ENCODE measurements at regions of chr17 and their contacts with region 1.

Region 1: GRCh38 chr17:75289115-75289831 is at the start of gene SLC25A19:
- DNase-seq: peak; percentile 95 to 99 (median 97)
- H3K4me3 ChIP-seq: peak within 1 kb of the TSS; percentile 93 to 96
- H3K4me3 Mint-ChIP-seq: peak within 1 kb of the TSS; percentile 98 to 100 (median 100)
- H3K27ac ChIP-seq: peak within 1 kb of the TSS; percentile 79
- H3K27ac Mint-ChIP-seq: peak within 1 kb of the TSS; percentile 98 to 100 (median 100)
- H3K4me1 ChIP-seq: peaks cover 12% of the 10 kb centered on the region
- H3K4me1 Mint-ChIP-seq: peaks cover 4 to 31% (median 14%) of the 10 kb centered on the region in 4 donors
- H3K27me3 ChIP-seq: no peaks in the 10 kb centered on the region
- H3K27me3 Mint-ChIP-seq: no peaks in the 10 kb centered on the region
- total RNA-seq, gene SLC25A19: 19.8 to 21.8 TPM

Region 2: GRCh38 chr17:74873038-74873873 is 416.0 kb before region 1 on chr17:
- CTCF ChIA-PET with region 1: no interaction called
- POLR2A ChIA-PET with region 1: interaction called, 12 read pairs
- intact Hi-C with region 1: loop called (anchors 1 kb)
- DNase-seq: peak; percentile 97 to 100 (median 99)
- H3K4me3 ChIP-seq: peak overlapping the region; percentile 79 to 84
- H3K4me3 Mint-ChIP-seq: peak overlapping the region; percentile 87 to 98 (median 94)
- H3K27ac ChIP-seq: peak overlapping the region; percentile 90
- H3K27ac Mint-ChIP-seq: peak overlapping the region; percentile 90 to 98 (median 98)
- H3K4me1 ChIP-seq: peaks cover 22% of the 10 kb centered on the region
- H3K4me1 Mint-ChIP-seq: peaks cover 10 to 27% (median 17%) of the 10 kb centered on the region in 4 donors
- H3K27me3 ChIP-seq: no peaks in the 10 kb centered on the region
- H3K27me3 Mint-ChIP-seq: no peaks in the 10 kb centered on the region

Region 3: GRCh38 chr17:75205037-75205792 is 84.1 kb before region 1 on chr17 and contains the start of gene NUP85:
- CTCF ChIA-PET with region 1: interaction called, 6 read pairs
- POLR2A ChIA-PET with region 1: interaction called, 14 read pairs
- intact Hi-C with region 1: no loop called
- DNase-seq: peak; percentile 88 to 95 (median 93)
- H3K4me3 ChIP-seq: peak within 1 kb of the TSS; percentile 55 to 86
- H3K4me3 Mint-ChIP-seq: peak within 1 kb of the TSS; percentile 93 to 99 (median 96)
- H3K27ac ChIP-seq: peak within 1 kb of the TSS; percentile 80
- H3K27ac Mint-ChIP-seq: peak within 1 kb of the TSS; percentile 99 to 100 (median 99)
- H3K4me1 ChIP-seq: peaks cover 26% of the 10 kb centered on the region
- H3K4me1 Mint-ChIP-seq: peaks cover 15 to 48% (median 24%) of the 10 kb centered on the region in 4 donors
- H3K27me3 ChIP-seq: no peaks in the 10 kb centered on the region
- H3K27me3 Mint-ChIP-seq: no peaks in the 10 kb centered on the region
- total RNA-seq, gene NUP85: 137 to 164 TPM

Region 4: DNA sequence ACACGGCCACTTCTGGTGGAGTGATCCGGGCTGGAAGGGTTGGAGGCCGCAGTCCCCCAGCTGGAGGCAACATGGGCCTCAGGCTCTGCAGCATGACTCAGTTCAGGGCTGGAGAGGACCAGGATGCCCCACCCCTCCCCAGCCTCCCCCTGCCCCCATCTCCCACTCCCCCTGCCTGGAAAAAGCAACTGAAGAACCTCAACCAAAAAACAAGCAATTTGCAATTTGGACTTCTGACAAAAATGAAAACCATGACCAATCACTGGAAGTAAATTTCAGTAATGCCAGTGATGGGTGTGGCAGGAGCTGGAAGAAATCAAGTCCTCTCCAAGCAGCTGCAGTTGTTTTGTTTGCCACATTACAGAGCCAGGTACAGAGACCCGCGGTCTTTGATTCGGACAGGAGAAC is 11.6 kb before region 1 on chr17:
- CTCF ChIA-PET with region 1: interaction called, 59 read pairs
- POLR2A ChIA-PET with region 1: interaction called, 148 read pairs
- intact Hi-C with region 1: no loop called
- DNase-seq: no peak
- H3K4me3 ChIP-seq: no peak overlapping the region
- H3K4me3 Mint-ChIP-seq: no peak overlapping the region
- H3K27ac ChIP-seq: no peak overlapping the region
- H3K27ac Mint-ChIP-seq: no peak overlapping the region
- H3K4me1 ChIP-seq: peaks cover 6% of the 10 kb centered on the region
- H3K4me1 Mint-ChIP-seq: peaks cover 0 to 14% (median 4%) of the 10 kb centered on the region in 4 donors
- H3K27me3 ChIP-seq: no peaks in the 10 kb centered on the region
- H3K27me3 Mint-ChIP-seq: no peaks in the 10 kb centered on the region

Region 5: DNA sequence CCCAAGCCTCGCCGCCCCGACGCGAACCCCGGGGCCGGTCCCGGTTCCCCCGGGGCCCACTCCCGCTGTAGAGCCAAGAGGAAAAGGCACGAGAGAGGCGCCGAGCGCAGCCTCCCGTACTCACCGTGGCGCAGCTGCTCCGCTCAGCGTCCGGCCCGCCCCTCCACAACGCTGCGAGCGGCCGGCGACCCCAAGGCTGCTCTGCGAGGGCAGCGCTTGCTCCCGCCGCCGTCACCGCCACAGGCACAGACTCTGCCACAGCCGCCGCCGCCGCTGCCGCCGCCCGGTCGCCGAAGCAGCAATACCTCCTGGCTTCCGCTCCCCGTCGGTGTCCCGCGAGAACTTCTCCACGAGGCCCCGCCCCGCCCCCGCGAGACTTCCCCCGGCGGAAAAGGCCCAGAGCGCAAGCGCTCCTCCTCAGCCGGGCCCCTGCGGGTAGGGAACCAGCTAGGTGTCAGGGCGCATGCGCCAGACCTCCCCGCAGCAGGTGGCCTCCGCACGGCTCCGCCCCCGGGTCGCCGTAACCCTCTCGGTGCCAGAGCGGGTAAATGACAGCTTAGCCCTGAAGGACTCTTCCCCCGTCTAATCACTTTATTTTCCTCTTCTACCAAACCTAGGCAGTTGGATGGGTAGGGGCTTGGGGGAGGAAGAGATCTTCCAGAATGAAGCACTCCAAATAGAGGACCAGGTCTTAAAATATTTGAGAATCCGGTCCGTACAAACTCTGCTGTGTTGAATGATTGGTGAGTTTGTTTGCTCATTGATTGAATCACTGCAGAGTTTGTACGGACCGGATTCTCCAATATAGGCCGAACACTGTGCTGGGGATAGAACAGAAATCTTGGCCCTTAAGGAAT is 116.3 kb after region 1 on chr17 and contains the start of gene GRB2:
- CTCF ChIA-PET with region 1: interaction called, 6 read pairs
- POLR2A ChIA-PET with region 1: interaction called, 32 read pairs
- intact Hi-C with region 1: loop called (anchors 1 kb)
- DNase-seq: peak; percentile 99 to 100 (median 100)
- H3K4me3 ChIP-seq: peak within 1 kb of the TSS; percentile 88 to 92
- H3K4me3 Mint-ChIP-seq: peak within 1 kb of the TSS; percentile 96 to 99 (median 97)
- H3K27ac ChIP-seq: peak within 1 kb of the TSS; percentile 89
- H3K27ac Mint-ChIP-seq: peak within 1 kb of the TSS; percentile 91 to 99 (median 96)
- H3K4me1 ChIP-seq: peaks cover 43% of the 10 kb centered on the region
- H3K4me1 Mint-ChIP-seq: peaks cover 25 to 54% (median 37%) of the 10 kb centered on the region in 4 donors
- H3K27me3 ChIP-seq: no peaks in the 10 kb centered on the region
- H3K27me3 Mint-ChIP-seq: no peaks in the 10 kb centered on the region
- total RNA-seq, gene GRB2: 131 to 133 TPM

Region 6: DNA sequence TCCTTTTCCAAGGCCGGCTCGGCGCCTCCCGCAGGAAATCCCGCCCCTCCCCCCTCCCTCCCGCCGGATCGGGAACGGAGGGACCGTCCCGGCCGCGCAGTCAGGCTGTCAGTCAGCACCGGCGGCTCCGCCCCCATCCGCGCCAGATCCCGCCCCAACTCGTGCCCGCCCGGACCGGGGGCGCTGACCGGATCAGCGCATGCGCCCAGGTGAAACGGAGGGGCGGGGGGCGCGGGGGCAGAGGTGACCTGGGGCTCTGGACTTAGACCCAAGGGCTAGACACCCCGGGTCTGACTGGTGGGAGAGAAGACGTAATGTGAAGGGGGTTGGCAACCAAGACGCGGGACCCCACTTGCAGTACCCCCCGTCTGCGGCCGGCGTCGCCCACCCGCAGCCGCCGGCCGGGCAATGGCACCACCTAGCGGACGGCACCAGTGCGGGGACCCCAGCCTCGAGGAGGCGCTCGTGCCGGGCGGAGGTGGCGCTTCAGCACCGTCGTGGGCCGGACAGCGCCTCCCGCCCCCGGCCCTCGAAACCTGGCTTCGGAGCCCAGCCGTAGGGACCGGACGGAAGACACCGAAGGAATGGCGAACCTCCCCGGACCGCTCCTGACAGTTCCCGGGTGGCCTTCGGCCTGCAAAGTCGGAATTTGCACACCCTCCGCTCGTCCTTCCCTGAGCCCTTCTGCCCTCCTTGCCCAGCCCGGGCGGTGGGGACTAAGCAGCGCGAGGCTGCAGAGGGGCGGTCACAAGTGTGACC is 226.4 kb after region 1 on chr17 and contains the start of gene CASKIN2:
- CTCF ChIA-PET with region 1: interaction called, 5 read pairs
- POLR2A ChIA-PET with region 1: interaction called, 18 read pairs
- intact Hi-C with region 1: loop called (anchors 2 kb)
- DNase-seq: peak; percentile 68 to 74 (median 70)
- H3K4me3 ChIP-seq: peak within 1 kb of the TSS; percentile 69 to 74
- H3K4me3 Mint-ChIP-seq: peak within 1 kb of the TSS; percentile 70 to 84 (median 80)
- H3K27ac ChIP-seq: no peak within 1 kb of the TSS
- H3K27ac Mint-ChIP-seq: peak within 1 kb of the TSS in 6 of 7 donors; percentile 19 to 75 (median 52)
- H3K4me1 ChIP-seq: peaks cover 29% of the 10 kb centered on the region
- H3K4me1 Mint-ChIP-seq: peaks cover 16 to 31% (median 19%) of the 10 kb centered on the region in 4 donors
- H3K27me3 ChIP-seq: no peaks in the 10 kb centered on the region
- H3K27me3 Mint-ChIP-seq: no peaks in the 10 kb centered on the region
- total RNA-seq, gene CASKIN2: 0.32 to 0.53 TPM

Region 7: DNA sequence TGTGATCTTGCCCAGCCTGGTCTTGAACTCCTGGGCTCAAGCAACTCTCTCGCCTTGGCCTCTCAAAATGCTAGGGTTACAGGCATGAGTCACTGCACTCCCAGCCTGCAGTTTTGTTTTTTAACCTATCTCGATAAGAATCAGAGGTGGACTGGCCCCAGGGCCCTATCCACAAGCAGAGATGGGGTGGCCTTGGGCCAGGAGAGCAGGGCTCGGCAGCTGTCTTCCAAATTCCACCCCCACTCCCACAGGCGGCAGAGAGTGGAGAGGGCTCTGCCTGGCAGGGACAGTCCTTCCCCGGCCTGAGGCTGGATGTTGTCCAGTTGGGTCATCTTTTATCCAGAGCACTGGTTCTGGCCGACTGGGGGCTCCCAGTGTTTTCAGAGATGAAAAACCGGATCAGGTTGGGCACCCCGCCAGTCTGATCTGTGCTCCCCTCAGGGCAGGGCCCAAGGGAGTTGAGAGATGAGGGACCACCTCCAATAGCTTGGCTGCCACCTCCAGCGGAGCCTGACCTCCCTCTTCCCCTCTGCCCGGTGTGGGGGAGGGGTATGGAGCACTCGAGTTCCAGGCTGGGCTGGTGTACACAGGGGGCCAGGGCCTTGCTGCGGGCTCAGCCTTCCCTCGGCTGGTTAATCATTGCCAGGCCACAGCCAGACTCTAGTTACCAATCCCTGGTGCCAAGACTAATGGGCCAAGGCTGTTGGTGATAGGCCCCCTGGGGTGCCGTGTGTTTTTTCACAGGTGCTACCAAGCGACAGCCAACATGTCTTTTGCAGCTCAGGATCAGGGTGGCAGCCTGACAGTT is 268.0 kb after region 1 on chr17:
- CTCF ChIA-PET with region 1: no interaction called
- POLR2A ChIA-PET with region 1: no interaction called
- intact Hi-C with region 1: no loop called
- DNase-seq: no peak
- H3K4me3 ChIP-seq: no peak overlapping the region
- H3K4me3 Mint-ChIP-seq: no peak overlapping the region
- H3K27ac ChIP-seq: no peak overlapping the region
- H3K27ac Mint-ChIP-seq: no peak overlapping the region
- H3K4me1 ChIP-seq: no peaks in the 10 kb centered on the region
- H3K4me1 Mint-ChIP-seq: no peaks in the 10 kb centered on the region
- H3K27me3 ChIP-seq: no peaks in the 10 kb centered on the region
- H3K27me3 Mint-ChIP-seq: no peaks in the 10 kb centered on the region

Measured in CD4-positive, alpha-beta memory T cell (primary cell).